Caco-2 (cell line): ENCODE measurements at regions of chr5 and their contacts with region 1.

Region 1: DNA sequence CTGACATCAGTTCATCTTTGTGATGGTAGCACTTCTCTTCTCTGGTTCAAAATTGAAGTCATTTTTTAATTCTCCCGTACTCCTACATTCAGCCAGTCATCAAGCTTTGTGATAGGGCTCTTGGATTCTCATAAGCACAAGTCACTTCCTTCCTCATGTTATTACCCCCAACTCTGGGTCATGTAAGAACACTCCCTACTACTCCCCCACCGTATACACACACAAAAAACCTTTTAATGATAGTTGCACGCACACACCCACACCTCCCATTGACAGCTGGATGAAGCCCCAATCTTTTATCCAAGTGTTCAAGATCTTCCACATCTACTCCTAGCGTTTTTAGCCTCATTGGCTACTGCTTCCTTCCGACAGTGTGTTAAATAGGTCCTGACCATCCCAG is 16.8 kb downstream of the KDM3B start:
- DNase-seq: no peak
- H3K4me3 ChIP-seq: no peak overlapping the region
- H3K4me3 Mint-ChIP-seq: no peak overlapping the region
- H3K27ac Mint-ChIP-seq: no peak overlapping the region
- H3K4me1 ChIP-seq: no peaks in the 10 kb centered on the region
- H3K4me1 Mint-ChIP-seq: peaks cover 5% of the 10 kb centered on the region
- H3K27me3 ChIP-seq: no peaks in the 10 kb centered on the region
- H3K27me3 Mint-ChIP-seq: no peaks in the 10 kb centered on the region
- CTCF ChIP-seq: no peak

Region 2: DNA sequence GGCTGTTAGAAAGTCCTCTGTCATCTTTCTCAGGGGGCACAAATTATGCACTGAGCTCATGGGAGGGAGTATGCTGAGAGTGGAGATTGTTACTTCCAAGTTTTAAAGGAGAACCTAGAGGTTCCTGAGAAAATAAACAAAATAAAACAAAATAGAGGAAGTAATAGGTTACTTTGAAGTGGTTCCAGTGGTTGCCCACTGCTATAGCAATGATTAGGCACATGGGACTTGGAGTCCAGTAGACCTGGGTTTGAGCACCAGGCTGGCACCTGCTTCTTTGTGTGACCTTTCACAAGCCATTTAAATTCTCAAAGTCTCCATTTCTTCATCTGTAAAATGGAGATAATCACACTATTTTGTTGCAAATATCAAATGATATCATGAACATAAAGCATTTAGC is 142.4 kb before region 1 on chr5:
- CTCF ChIA-PET with region 1: no interaction called
- POLR2A ChIA-PET with region 1: interaction called, 15 read pairs
- intact Hi-C with region 1: no loop called
- DNase-seq: no peak
- H3K4me3 ChIP-seq: no peak overlapping the region
- H3K4me3 Mint-ChIP-seq: no peak overlapping the region
- H3K27ac Mint-ChIP-seq: no peak overlapping the region
- H3K4me1 ChIP-seq: no peaks in the 10 kb centered on the region
- H3K4me1 Mint-ChIP-seq: peaks cover 14% of the 10 kb centered on the region
- H3K27me3 ChIP-seq: no peaks in the 10 kb centered on the region
- H3K27me3 Mint-ChIP-seq: no peaks in the 10 kb centered on the region
- CTCF ChIP-seq: no peak